ENCODE measurements at regions of chr15 and their contacts with region 1.

Region 1: GRCh38 chr15:83747050-83747717 is 93.3 kb downstream of the ADAMTSL3 start:
- DNase-seq: no peak
- ATAC-seq: peak; percentile 83

Region 2: DNA sequence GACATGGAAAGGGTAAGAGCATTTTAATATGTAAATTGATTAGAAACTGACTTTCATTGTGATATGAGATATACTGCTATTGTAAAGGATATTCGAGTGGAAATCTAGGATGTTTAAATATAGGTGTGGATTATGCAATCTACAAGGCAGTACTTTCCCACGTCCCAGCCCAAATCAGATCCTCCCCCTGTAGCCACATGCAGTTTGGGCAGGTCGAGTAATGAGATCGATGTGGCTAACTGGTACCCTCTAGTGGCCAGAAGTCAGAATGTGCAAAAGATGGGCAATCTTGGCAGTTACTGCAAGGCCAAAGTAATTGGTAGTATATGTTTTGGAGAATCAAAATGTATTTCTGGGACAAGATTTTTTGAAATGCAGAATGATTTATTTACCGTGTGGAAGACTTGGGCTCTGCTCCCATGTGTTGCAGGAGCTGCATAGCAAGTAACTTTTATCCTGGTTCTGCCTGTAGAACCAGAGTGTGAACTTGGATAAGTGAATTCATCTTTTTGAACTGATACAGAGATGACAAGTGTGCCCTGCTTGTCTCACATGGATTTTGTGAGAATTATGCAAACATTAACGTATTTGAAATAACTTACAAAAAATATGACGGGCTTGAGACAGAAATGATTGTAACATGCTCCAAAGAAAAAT is 187.7 kb before region 1 on chr15:
- intact Hi-C with region 1: no loop called
- DNase-seq: no peak
- ATAC-seq: peak; percentile 76

Region 3: GRCh38 chr15:83571820-83572707 is 175.1 kb before region 1 on chr15:
- intact Hi-C with region 1: loop called (anchors 5 kb)
- DNase-seq: no peak
- ATAC-seq: no peak

Region 4: DNA sequence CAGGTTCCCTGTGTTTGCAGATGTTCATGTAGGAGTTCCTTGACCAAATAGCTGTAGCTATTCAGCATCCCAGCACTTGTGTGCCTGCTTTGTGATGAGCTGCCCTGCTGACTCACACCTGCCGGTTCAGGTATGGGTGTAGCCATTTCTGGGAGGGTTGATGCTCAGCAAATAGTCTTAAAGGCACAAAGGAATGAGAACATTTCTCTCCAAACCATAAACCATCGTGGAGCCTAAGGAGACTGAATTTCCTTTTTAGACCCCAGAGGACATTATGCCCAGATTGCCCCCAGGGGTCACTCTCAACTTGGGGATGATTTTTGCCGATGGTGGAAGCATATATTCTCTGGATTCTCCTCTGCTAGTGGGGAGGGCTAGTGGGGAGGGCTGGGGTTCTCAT is 12.7 kb before region 1 on chr15:
- intact Hi-C with region 1: no loop called
- DNase-seq: no peak
- ATAC-seq: peak; percentile 46

Region 5: GRCh38 chr15:83843471-83843871 is 96.3 kb after region 1 on chr15:
- intact Hi-C with region 1: loop called (anchors 5 kb)
- DNase-seq: no peak
- ATAC-seq: peak; percentile 74